ENCODE measurements at regions of chr7 and their contacts with region 1.

Region 1: DNA sequence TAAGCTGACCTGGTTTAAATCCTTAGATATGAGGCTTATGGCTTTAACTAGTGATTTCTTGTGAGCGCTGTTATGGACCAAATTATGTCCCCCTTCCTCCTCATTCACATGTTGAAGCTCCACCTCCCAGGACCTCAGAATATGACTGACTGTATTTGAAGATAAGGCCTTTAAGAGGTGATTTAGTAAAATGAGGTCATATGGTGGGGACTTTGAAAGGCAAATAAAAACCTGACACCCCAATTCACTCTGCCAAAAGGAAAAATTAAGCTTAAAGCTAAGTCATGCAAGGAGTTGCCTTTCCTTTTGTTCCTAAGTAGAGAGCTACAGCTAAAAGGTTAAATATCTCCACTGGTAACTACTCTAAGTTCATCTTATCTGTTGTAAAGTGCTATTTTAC is 36.4 kb upstream of the FIGNL1 start:
- DNase-seq: no peak
- CTCF ChIP-seq: no peak

Region 2: DNA sequence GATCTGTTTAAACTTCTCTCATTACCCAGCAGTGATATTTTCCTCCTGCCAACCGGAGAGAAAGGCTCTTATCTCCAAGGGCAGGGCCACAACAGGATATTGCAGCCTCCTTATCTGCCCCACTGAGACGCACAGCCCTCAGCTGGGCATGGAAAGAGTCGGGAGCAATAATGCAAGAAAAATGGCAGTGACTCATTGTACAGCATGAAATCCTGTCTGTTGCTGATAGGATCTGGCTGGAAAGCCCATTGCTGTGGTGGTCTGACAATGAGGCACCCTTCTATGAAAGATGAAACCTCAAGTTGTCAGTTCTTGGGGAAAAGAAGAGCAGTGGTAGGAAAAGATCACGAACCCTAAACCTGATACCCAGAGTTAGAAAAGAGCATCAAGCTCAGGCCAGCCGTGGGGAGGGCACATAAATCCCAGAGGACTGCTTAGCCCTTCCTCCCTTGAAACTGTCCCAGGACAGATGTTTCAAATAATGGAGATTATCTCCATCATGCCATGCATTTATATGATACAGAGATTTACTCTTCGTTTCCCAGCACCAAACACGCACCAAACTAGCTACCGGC is 10.6 kb after region 1 on chr7:
- CTCF ChIA-PET with region 1: interaction called, 10 read pairs
- POLR2A ChIA-PET with region 1: no interaction called
- DNase-seq: no peak
- CTCF ChIP-seq: no peak

Region 3: DNA sequence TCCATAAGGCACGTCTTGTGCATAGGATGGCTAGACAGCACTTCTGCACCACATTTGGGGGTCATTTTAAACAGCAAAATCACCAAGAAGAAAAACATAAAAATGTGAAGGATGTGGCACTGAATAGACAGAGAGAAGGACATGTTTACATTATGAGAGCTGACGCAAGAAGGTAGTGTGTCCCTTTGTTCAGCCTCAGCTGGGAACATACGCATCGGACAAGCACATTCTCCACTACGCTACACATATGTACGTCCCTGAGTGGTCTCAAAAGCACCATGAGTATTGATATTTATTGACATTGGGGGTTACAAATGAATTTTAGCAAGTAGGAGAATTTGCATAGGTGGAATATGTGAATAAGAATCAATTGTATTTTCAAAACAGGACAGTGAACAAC is 58.5 kb after region 1 on chr7:
- CTCF ChIA-PET with region 1: no interaction called
- POLR2A ChIA-PET with region 1: no interaction called
- DNase-seq: no peak
- CTCF ChIP-seq: no peak

Region 4: DNA sequence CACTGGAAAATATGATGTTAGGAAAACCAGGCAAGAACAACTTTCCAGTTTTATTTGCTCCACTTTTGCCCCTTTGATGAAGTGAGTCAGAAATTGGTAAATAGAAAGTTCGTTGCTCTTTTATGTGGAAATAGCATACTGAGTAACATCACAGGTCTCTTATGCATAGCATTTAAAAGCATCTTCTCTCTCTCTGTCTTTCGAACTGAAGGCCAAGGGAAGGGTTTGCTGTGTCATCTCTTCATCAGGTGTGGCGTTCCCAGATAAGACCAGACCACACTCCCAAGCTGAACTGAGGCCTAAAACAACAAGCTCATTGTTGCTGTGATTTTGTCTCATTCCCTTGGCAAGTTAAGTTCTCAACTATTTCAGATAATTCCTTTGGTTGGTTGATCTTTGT is 427.9 kb after region 1 on chr7:
- CTCF ChIA-PET with region 1: no interaction called
- POLR2A ChIA-PET with region 1: no interaction called
- DNase-seq: no peak
- CTCF ChIP-seq: no peak

Measured in GM10248 (cell line).